Activated B cell treated with CpG ODN at 0.5 μM for 24 hours (primary cell): ENCODE measurements at regions of chr22 and their contacts with region 1.

Region 1: DNA sequence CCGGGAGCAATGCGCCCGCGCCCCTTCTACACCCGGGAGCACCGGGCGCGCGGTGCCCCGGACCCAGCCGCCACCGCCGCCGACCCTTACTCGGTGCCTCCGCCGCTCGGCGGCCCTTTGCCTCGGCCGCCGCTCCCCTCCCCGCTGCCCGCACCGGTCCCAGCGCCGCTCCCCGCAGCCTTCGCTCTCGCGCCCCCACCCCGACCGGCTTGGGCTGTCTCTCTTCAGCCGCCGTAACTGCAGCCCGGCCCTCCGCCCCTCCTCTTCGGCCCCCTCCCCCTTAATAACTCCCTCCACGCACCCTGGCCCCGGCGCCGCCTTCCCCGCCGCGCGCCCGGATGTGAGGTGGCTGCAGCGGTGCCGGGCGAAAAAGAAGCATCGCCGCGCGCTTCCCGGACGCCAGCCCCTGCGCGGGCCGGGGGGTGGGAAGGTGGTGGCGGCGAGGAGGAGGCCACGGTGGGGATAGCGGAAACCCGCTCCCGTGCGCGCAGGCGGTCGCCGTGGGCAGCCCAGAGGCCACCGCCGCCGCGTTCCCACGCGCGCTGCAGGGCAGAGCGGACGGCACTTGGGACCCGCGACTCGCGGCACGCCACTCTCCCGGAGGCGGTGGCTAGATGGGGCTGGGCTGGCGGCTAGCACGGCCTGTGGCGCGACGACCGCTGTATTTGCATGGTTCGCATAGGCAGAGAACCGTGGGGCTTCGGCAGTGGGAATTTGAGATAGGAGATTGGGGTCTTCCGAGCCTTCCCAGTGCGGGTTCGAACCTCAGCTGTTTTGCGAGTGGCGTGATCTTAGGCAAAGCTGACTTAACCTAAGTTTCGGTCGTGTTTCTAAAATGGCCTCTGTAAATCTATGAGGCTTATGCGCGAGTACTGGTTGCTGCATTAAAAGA is at the start of gene EIF4ENIF1:
- DNase-seq: peak; percentile 82
- ATAC-seq: peak; percentile 66
- H3K4me3 Mint-ChIP-seq: peak within 1 kb of the TSS; percentile 93
- H3K27ac Mint-ChIP-seq: peak within 1 kb of the TSS; percentile 100
- H3K4me1 Mint-ChIP-seq: peaks cover 54% of the 10 kb centered on the region
- H3K27me3 Mint-ChIP-seq: no peaks in the 10 kb centered on the region
- CTCF ChIP-seq: no peak
- total RNA-seq, gene EIF4ENIF1: 46.4 and 53.6 TPM in 2 replicates

Region 2: DNA sequence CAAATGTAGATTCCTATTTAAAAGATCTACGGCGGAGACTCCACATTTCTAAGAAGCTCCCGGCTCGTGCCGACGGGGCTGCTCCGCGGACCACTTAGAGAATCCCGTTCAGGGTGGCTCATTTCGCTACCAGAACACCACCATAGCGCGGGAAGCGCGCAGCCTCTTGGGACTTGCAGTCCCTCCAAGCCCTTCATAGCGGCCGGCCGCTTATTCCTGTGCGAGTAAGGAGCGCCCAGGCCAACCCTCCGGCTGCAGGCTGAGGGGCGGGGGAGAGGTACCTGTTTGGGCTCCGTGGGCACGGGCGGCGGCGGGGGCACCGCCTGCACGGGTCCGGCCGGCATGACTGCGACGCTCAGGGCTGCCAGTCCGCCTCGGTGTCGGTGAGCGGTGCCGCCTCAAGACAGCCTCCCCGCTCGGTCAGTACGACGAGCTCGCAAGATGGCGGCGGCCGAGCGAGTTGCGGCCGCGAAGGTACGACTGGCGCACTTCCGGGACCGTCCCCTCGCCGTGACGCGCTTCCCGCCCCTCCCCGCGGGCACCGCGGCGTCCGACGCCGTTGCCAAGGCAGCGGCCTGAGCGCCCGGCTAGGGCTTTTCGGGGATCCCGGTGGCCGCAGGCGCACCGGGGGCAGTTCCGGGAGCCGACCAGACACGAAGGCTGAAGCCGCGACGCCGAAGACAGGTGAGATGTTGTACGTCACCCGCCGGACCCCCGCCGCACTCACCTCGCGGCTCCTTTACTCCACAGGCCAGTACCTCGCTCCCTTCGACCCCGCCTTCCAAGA is 1133.2 kb before region 1 on chr22 and contains the starts of genes CCDC157 and SF3A1:
- CTCF ChIA-PET with region 1: no interaction called
- POLR2A ChIA-PET with region 1: no interaction called
- intact Hi-C with region 1: loop called (anchors 5 kb)
- DNase-seq: peak; percentile 88
- ATAC-seq: peak; percentile 86
- H3K4me3 Mint-ChIP-seq: peak within 1 kb of the TSS; percentile 92
- H3K27ac Mint-ChIP-seq: peak within 1 kb of the TSS; percentile 76
- H3K4me1 Mint-ChIP-seq: peaks cover 43% of the 10 kb centered on the region
- H3K27me3 Mint-ChIP-seq: no peaks in the 10 kb centered on the region
- CTCF ChIP-seq: no peak
- total RNA-seq, gene CCDC157: 1.8 and 2.9 TPM in 2 replicates
- total RNA-seq, gene SF3A1: 263 and 269 TPM in 2 replicates

Region 3: DNA sequence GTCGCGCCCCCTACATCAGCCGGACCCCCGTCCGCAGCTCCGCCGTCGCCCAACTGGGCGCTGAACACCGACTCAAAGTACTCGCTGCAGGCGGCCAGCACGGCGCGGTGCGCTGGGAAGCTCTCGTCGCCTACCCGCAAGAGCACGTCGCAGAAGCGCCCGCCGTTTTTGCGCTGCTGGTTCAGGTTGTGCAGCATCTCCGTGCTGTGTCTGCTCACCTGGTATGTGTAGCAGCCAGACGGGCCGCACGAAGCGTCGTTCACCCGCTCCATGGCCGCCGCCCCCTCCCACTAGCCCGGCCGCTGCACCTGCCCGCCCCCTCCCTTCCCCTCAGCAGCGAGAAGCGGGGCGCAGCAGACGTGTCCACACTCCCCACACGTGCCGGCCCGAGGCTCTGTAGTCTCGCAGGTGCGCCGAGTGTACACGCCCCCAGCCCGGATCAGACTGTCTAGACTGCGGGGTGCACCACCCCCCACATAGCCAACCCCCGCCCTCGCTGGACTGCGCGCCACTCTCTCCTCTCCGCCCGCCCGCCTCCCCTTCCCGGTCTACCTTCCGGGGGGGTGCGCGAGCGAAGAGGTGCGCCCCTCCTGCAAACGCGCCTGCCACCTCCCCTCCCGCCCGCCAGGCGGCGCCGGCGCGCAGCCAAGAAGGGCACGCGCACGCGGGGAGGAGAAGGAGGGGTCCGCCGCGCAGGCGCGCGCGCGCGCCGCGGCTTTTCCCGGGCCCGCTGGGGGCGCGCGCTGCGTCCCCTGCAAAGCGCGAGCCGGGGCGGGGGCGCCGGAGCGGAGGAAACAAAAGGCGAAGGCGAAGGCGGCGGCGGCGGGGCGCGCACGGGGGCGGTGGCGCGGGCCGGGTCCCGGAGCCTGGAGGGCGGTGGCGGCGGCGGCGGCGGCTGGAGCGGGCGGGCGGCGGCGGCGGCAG is 144.3 kb before region 1 on chr22:
- CTCF ChIA-PET with region 1: no interaction called
- POLR2A ChIA-PET with region 1: interaction called, 16 read pairs
- intact Hi-C with region 1: loop called (anchors 1 kb)
- DNase-seq: peak; percentile 89
- ATAC-seq: peak; percentile 58
- H3K4me3 Mint-ChIP-seq: peak overlapping the region; percentile 83
- H3K27ac Mint-ChIP-seq: peak overlapping the region; percentile 80
- H3K4me1 Mint-ChIP-seq: peaks cover 50% of the 10 kb centered on the region
- H3K27me3 Mint-ChIP-seq: no peaks in the 10 kb centered on the region
- CTCF ChIP-seq: peak; percentile 56

Region 4: GRCh38 chr22:31451709-31452571 is 37.9 kb before region 1 on chr22:
- CTCF ChIA-PET with region 1: interaction called, 6 read pairs
- POLR2A ChIA-PET with region 1: interaction called, 3 read pairs
- intact Hi-C with region 1: loop called (anchors 5 kb)
- DNase-seq: no peak
- ATAC-seq: peak; percentile 68
- H3K4me3 Mint-ChIP-seq: no peak overlapping the region
- H3K27ac Mint-ChIP-seq: peak overlapping the region; percentile 53
- H3K4me1 Mint-ChIP-seq: peaks cover 21% of the 10 kb centered on the region
- H3K27me3 Mint-ChIP-seq: no peaks in the 10 kb centered on the region
- CTCF ChIP-seq: no peak

Region 5: DNA sequence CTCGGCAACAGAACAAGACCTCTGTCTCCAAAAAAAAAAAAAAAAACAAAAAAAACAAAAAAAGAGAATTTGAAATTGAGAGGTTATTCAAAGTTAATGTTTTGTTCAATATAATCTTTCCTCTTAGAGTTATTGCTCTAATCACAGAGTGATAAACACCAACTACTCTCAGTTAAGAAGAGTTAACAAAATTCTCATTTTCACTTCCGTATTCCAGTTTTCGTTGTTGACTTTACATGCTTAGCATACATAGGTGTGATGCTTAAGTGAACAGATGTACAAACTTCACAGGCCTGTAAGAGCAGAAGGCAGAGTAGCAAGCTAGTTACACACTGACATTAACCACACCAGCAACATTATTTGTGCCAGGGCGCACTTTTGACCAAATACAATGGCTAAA is 12.5 kb before region 1 on chr22:
- CTCF ChIA-PET with region 1: no interaction called
- POLR2A ChIA-PET with region 1: interaction called, 14 read pairs
- intact Hi-C with region 1: loop called (anchors 1 kb)
- DNase-seq: no peak
- ATAC-seq: peak; percentile 95
- H3K4me3 Mint-ChIP-seq: no peak overlapping the region
- H3K27ac Mint-ChIP-seq: peak overlapping the region; percentile 82
- H3K4me1 Mint-ChIP-seq: peaks cover 24% of the 10 kb centered on the region
- H3K27me3 Mint-ChIP-seq: no peaks in the 10 kb centered on the region
- CTCF ChIP-seq: no peak